ENCODE measurements at regions of chr11 and their contacts with region 1.

Region 1: DNA sequence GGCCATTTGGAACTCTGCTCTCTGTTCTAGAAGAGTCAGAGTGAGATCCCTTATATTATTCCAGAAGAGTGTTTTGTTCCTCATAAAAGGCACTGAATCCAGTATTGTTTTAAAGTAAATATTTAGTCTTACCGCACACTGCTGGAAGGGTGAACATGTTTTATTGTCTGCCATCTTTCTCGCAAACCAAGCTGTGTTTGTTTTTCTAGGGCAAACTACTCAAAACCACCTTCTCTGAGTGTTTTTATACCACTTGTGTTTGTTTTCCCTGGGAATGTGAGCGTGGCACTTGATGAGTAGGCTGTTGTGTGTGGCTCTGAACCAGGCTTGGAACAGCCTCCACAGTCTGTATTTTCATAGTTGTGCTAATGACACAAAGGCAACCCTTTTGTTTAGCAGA is 89.8 kb downstream of the DBX1 start:
- DNase-seq: peak; percentile 30
- ATAC-seq: peak; percentile 88
- H3K4me3 ChIP-seq: no peak overlapping the region
- H3K27ac ChIP-seq: peak overlapping the region; percentile 44
- H3K4me1 ChIP-seq: peaks cover 4% of the 10 kb centered on the region; the same call in 1 of the 2 replicates
- H3K27me3 ChIP-seq: no peaks in the 10 kb centered on the region
- CTCF ChIP-seq: no peak

Region 2: DNA sequence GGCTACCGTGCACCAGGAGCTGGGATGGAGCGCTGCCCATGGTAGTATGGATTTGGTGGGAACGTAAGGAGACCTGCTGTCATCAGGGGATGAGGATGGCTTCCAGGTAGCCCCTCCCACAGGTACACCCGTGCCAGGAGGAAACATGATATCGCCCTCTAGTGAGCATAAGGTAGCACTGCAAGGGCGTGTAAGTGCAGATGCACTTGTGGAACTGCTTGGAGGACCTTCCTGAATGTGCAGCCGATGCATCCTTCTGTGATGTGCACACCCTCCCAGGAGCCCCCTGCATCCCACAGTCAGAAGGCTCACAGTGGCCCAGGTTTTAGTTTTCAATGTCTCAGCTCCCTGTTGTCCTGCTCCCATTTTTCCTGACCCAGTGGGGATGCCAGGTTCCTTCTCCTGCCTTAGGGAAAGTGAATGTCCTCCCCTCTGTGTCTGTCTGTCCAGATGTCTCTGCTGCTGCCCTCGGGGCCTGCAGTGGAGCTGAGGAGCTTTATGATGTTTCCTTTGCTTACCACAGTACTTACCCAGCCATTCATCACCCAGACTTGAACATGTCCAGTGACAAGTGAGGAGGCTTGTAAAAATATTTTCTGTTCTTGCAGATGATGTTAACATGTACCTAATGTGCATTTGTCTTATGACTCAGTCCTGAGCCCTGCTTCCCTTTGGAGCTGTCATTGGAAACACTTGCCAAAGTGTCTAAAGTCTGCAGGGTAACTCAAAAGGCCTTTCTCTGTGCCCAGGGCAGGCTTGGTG is 40.6 kb after region 1 on chr11:
- CTCF ChIA-PET with region 1: interaction called, 4 read pairs
- POLR2A ChIA-PET with region 1: no interaction called
- intact Hi-C with region 1: loop called (anchors 1 kb)
- DNase-seq: peak; percentile 90
- ATAC-seq: peak; percentile 77
- H3K4me3 ChIP-seq: no peak overlapping the region
- H3K27ac ChIP-seq: peak overlapping the region; percentile 97
- H3K4me1 ChIP-seq: peaks cover 35% of the 10 kb centered on the region
- H3K27me3 ChIP-seq: no peaks in the 10 kb centered on the region
- CTCF ChIP-seq: peak; percentile 91

Measured in PC-3 (cell line).